ENCODE measurements at regions of chr20 and their contacts with region 1.

Region 1: DNA sequence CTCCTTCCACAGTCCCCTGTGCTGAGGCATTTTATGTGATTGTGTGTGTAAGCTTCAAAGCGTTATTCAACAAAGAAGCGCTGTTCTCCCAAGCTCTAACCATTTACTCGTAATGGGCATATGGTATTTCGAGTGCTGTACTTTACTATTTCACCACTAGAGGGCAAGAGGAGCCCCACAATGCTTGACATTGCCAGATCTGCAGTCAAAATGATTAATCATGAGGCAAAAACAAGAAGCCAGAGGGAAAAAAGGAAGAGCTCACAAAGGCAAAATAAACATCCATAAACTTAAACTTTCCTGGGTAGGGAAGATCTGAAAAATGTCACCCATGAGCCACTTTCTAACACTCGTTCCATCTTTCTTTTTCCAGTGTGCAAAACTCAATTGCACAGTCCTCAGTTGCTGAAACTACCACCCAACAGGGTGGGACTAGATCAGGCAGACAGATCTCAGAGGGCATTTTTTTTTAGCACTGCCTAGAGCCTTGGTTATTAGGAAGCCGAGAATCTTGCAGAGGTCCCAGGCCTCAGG is 215.0 kb upstream of the PLCB4 start:
- H3K4me3 Mint-ChIP-seq: no peak overlapping the region
- H3K27ac Mint-ChIP-seq: no peak overlapping the region
- H3K4me1 Mint-ChIP-seq: no peaks in the 10 kb centered on the region
- H3K27me3 Mint-ChIP-seq: no peaks in the 10 kb centered on the region

Region 2: GRCh38 chr20:7399575-7399974 is 1454.3 kb before region 1 on chr20:
- intact Hi-C with region 1: no loop called
- H3K4me3 Mint-ChIP-seq: no peak overlapping the region
- H3K27ac Mint-ChIP-seq: no peak overlapping the region
- H3K4me1 Mint-ChIP-seq: no peaks in the 10 kb centered on the region
- H3K27me3 Mint-ChIP-seq: peaks cover 12% of the 10 kb centered on the region

Region 3: GRCh38 chr20:8912731-8913130 is 58.9 kb after region 1 on chr20:
- intact Hi-C with region 1: loop called (anchors 10 kb)
- H3K4me3 Mint-ChIP-seq: no peak overlapping the region
- H3K27ac Mint-ChIP-seq: no peak overlapping the region
- H3K4me1 Mint-ChIP-seq: no peaks in the 10 kb centered on the region
- H3K27me3 Mint-ChIP-seq: no peaks in the 10 kb centered on the region

Region 4: GRCh38 chr20:9172851-9173250 is 319.0 kb after region 1 on chr20:
- intact Hi-C with region 1: loop called (anchors 5 kb)
- H3K4me3 Mint-ChIP-seq: no peak overlapping the region
- H3K27ac Mint-ChIP-seq: no peak overlapping the region
- H3K4me1 Mint-ChIP-seq: no peaks in the 10 kb centered on the region
- H3K27me3 Mint-ChIP-seq: no peaks in the 10 kb centered on the region

Region 5: GRCh38 chr20:9359561-9360308 is 505.9 kb after region 1 on chr20:
- intact Hi-C with region 1: loop called (anchors 1 kb)
- H3K4me3 Mint-ChIP-seq: no peak overlapping the region
- H3K27ac Mint-ChIP-seq: no peak overlapping the region
- H3K4me1 Mint-ChIP-seq: no peaks in the 10 kb centered on the region
- H3K27me3 Mint-ChIP-seq: no peaks in the 10 kb centered on the region

Region 6: DNA sequence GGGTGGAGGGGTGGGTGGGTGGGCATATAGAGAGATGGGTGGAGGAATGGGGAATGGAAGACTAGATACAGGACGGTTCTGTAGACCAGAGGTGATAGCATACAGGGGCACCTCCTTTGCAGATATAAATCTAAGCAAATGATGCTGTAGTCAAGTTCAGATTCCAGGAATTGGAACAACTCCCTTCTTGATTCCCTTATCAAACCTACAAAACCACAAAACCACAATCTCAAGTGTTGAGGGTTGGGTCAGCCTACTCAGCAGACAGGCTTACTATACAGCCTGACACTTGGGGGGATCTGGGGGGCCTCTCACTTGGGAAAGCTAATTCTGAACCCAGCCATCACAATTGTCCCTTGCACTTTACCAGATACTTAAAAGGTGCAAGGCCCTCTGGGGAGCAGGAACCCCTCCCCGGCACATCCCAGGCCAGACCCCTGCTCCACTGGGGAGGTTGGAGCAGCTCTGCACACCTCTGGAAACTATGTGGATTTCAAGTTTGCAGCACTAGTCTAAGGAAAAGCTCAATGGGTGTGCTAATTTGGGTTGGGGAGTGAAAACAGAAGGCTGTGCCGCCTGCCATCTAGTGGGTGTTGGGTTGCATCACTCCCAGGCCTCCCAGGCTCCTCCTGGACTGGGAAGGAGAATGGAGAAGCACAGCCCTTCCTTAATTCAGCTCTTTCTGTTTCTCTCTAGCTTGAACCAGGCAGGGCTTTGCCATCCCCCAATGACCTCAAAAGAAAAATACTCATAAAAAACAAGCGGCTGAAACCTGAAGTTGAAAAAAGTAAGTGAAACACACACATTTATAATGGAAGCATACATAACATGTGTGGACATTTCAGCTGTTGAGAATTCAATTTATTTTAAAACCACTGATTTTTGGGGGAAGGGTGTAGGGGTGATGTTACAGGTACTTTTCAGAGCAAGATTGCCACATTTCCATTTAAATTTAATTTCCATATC is 539.3 kb after region 1 on chr20:
- intact Hi-C with region 1: loop called (anchors 2 kb)
- H3K4me3 Mint-ChIP-seq: no peak overlapping the region
- H3K27ac Mint-ChIP-seq: no peak overlapping the region
- H3K4me1 Mint-ChIP-seq: peaks cover 31% of the 10 kb centered on the region
- H3K27me3 Mint-ChIP-seq: peaks cover 8% of the 10 kb centered on the region